Vagina (tissue), 2 donors: ENCODE measurements at regions of chr1 and their contacts with region 1.

Region 1: DNA sequence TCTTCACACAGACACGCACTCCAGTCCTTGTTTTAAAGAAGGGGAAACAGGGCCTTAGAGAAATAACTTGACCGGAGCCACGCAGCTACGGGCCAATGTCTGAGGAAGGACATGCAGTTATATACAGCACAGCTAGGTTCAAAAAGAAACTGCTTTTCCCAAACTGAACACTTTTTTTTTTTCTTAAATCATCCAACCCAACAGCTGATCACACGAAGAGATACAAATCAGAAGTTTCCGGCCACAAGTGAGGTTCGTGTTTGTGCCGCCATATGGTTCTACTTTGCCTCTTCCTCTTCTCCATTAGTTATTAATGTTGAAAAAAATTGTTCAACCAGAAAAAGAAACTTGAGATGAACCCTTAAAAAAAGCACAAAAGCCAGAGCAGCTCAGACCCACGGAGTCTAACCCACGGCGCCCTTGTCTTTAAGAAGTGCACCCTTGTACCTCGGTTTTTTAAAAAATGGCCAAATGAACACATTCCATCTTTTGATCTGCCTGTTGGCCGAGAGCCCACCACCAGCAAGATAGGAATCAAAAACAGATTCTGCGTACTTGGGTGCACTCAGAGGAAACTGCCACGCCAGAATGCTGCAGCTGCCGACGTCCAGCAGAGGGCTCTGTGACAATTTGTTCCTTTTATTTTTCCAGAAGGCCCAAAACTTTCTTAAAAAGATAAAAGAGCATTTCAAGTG is 78.9 kb downstream of the SLC66A1 start:
- DNase-seq: no peak
- H3K4me3 ChIP-seq: peak overlapping the region in 1 of 2 donors; percentile 0
- H3K27ac ChIP-seq: peak overlapping the region; percentile 93
- H3K4me1 ChIP-seq: peaks cover 99% of the 10 kb centered on the region
- H3K27me3 ChIP-seq: no peaks in the 10 kb centered on the region
- CTCF ChIP-seq: peak; percentile 52 to 88 (median 81)
- POLR2A ChIP-seq: no peak

Region 2: GRCh38 chr1:18875107-18875795 is 515.8 kb before region 1 on chr1:
- intact Hi-C with region 1: no loop called
- DNase-seq: no peak
- H3K4me3 ChIP-seq: no peak overlapping the region
- H3K27ac ChIP-seq: no peak overlapping the region
- H3K4me1 ChIP-seq: no peaks in the 10 kb centered on the region
- H3K27me3 ChIP-seq: no peaks in the 10 kb centered on the region
- CTCF ChIP-seq: peak; percentile 51 to 69 (median 58)
- POLR2A ChIP-seq: no peak

Region 3: GRCh38 chr1:19359357-19359756 is 31.7 kb before region 1 on chr1:
- intact Hi-C with region 1: loop called (anchors 5 kb)
- DNase-seq: no peak
- H3K4me3 ChIP-seq: no peak overlapping the region
- H3K27ac ChIP-seq: peak overlapping the region; percentile 75
- H3K4me1 ChIP-seq: peaks cover 76% of the 10 kb centered on the region
- H3K27me3 ChIP-seq: no peaks in the 10 kb centered on the region
- CTCF ChIP-seq: no peak
- POLR2A ChIP-seq: no peak